ENCODE measurements at regions of chr14 and their contacts with region 1.

Region 1: DNA sequence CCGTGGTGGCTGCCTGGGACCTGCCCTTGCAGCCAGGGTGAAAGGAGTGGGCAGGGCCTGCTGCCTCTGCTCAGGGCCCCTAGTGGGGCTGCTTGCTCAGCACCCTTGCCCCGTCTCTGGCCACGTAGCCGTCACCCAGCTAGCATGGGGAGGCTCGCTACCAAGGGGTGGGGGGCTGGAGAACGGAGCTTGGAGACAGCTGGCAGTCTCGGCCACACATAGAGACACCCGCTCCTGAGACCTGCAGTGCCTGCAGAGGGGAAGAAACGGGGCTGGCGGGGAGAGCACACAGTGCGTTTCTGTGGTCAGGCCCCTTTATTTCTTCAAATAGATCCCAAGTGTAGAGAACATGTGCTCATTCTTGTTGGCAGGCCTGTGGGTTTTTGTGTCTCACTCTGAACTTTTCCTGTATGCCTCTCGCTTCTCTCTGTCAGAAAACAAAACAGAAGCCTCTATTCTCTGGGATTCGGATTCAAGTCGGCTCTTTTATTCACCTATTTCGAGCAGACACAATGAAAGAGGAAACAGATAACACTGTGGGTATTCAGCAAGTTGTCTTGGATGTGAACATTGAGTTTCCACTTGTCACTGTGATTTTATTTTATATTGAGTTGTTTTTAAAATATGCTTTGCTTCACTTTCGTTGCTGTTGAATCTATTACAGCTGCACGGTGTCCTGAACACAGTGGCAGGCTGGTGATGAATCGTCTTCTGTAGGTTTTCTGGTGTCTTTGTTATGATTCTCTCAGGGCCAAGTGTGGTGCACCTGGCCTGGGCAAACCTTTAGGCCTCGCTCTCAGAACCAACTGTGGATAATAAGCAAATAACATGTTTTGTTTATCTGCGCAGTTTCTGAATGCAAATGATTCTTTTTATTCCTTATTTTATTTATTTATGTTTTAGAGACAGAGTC is 26.5 kb downstream of the PACS2 start:
- DNase-seq: peak in 15 of 42 donors; percentile 16 to 76 (median 43)

Region 2: DNA sequence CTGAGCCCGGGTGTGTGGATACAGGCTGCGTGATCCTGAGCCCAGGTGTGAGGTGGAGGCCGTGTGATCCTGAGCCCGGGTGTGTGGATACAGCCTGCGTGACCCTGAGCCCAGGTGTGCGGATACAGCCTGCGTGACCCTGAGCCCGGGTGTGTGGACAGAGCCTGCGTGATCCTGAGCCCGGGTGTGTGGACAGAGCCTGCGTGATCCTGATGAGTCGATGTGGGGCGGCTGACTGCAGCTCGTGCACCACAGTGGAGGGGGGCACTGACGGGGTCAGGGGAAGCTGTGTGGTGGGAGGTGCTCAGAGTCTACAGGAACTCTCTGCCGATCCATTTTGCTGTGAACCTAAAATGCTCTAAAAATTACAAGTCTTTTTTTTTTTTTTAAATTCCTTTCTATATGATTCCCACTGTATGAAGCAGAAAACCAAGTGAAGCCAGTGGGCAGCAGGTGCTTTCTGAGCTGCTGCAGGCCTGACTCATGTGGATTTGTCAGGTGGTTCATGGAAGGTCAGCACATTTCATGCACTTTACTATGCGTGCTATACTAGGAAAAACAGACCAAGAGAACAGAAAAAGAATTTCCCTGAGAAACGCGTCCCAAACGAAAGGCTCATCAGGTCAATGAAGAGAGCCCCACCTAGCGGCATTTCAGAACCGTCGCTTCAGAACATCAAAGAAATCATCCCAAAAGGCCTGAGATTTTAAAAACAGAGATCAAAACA is 59.5 kb before region 1 on chr14:
- intact Hi-C with region 1: loop called (anchors 5 kb)
- DNase-seq: peak in 30 of 42 donors; percentile 20 to 80 (median 60)

Measured in head of caudate nucleus (tissue), 42 donors.